ENCODE measurements at regions of chr1 and their contacts with region 1.

Region 1: GRCh38 chr1:97820470-97821188 is 100.2 kb downstream of the DPYD start:
- DNase-seq: peak in 1 of 2 experiments; percentile 43
- H3K4me3 ChIP-seq: no peak overlapping the region
- H3K27ac ChIP-seq: no peak overlapping the region
- H3K4me1 ChIP-seq: no peaks in the 10 kb centered on the region
- H3K27me3 ChIP-seq: no peaks in the 10 kb centered on the region
- CTCF ChIP-seq: peak; percentile 78

Region 2: GRCh38 chr1:96966536-96967138 is 854.0 kb before region 1 on chr1:
- CTCF ChIA-PET with region 1: no interaction called
- POLR2A ChIA-PET with region 1: no interaction called
- intact Hi-C with region 1: loop called (anchors 5 kb)
- DNase-seq: peak; percentile 57 to 74
- H3K4me3 ChIP-seq: peak overlapping the region; percentile 42; the same call in 1 of the 2 replicates
- H3K27ac ChIP-seq: no peak overlapping the region
- H3K4me1 ChIP-seq: 0 out of 2 replicates have a peak, but pooled peaks cover 3% of the 10 kb centered on the region
- H3K27me3 ChIP-seq: no peaks in the 10 kb centered on the region
- CTCF ChIP-seq: peak; percentile 99

Region 3: GRCh38 chr1:97137862-97138514 is 682.6 kb before region 1 on chr1:
- CTCF ChIA-PET with region 1: no interaction called
- POLR2A ChIA-PET with region 1: no interaction called
- intact Hi-C with region 1: loop called (anchors 10 kb)
- DNase-seq: peak in 1 of 2 experiments; percentile 10
- H3K4me3 ChIP-seq: no peak overlapping the region
- H3K27ac ChIP-seq: no peak overlapping the region
- H3K4me1 ChIP-seq: no peaks in the 10 kb centered on the region
- H3K27me3 ChIP-seq: no peaks in the 10 kb centered on the region
- CTCF ChIP-seq: peak; percentile 76

Region 4: DNA sequence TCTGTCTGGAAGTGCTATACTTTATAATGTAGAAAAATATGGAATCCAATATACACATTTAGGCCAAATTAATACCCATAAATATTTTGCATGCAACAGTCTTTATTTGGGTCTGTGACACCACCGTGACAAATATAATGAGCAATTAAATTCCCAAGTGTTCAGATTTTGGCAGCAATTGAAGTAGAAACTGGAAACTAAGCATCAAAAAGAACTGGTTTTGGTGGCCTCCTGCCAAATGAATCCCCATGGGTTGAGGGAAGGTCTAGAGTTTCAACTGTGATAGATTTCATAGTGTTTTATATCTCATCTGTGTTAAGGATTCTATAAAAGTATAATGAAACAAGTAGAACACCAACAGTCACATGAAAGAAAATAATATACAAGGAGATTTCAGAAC is 11.9 kb after region 1 on chr1:
- CTCF ChIA-PET with region 1: interaction called, 17 read pairs
- POLR2A ChIA-PET with region 1: no interaction called
- intact Hi-C with region 1: no loop called
- DNase-seq: no peak
- H3K4me3 ChIP-seq: no peak overlapping the region
- H3K27ac ChIP-seq: no peak overlapping the region
- H3K4me1 ChIP-seq: no peaks in the 10 kb centered on the region
- H3K27me3 ChIP-seq: no peaks in the 10 kb centered on the region
- CTCF ChIP-seq: no peak